Colonic mucosa (tissue), 4 donors: ENCODE measurements at regions of chr7 and their contacts with region 1.

Region 1: DNA sequence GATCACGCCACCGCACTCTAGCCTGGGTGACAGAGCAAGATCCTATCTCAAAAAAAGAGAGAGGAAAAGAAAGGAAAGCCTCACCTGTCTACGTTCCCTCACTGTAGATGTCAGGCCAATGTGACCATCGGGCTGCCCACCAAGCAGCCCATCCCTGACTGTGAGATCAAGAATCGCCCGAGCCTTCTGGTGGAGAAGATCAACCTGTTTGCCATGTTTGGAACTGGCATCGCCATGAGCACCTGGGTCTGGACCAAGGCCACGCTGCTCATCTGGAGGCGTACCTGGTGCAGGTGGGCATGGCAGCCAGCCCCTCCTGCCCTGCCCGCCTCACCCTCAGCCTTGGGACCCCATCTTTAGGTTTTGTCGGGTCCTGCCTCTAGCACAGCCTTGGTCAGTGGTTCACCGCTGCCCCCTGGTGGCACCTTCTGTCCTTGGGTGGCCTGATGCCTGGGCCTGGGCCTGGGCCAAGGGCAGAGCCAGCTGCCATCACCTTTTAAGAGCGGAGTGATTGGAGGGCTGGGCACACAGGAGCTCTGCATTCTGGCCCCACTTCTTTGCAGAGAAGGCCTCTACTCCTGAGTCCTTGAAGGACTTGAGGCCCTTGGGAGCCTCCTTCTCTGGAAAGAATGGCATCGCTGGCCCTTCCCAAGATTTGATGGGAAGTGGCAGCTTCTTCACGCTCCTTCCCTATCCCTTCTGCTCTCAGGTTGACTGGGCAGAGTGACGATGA is 14.4 kb upstream of the AHCYL2 start:
- DNase-seq: peak; percentile 81
- H3K4me3 ChIP-seq: no peak overlapping the region
- H3K27ac ChIP-seq: no peak overlapping the region
- H3K4me1 ChIP-seq: no peaks in the 10 kb centered on the region
- H3K27me3 ChIP-seq: no peaks in the 10 kb centered on the region
- CTCF ChIP-seq: peak; percentile 78

Region 2: GRCh38 chr7:129017933-129018538 is 192.4 kb before region 1 on chr7:
- intact Hi-C with region 1: no loop called
- DNase-seq: no peak
- H3K4me3 ChIP-seq: no peak overlapping the region
- H3K27ac ChIP-seq: no peak overlapping the region
- H3K4me1 ChIP-seq: no peaks in the 10 kb centered on the region
- H3K27me3 ChIP-seq: no peaks in the 10 kb centered on the region
- CTCF ChIP-seq: no peak

Region 3: GRCh38 chr7:129163875-129164544 is 46.4 kb before region 1 on chr7:
- intact Hi-C with region 1: loop called (anchors 2 kb)
- DNase-seq: no peak
- H3K4me3 ChIP-seq: no peak overlapping the region
- H3K27ac ChIP-seq: no peak overlapping the region
- H3K4me1 ChIP-seq: no peaks in the 10 kb centered on the region
- H3K27me3 ChIP-seq: no peaks in the 10 kb centered on the region
- CTCF ChIP-seq: peak; percentile 75